Activated T-helper 2 cell treated with anti-CD3 and anti-CD28 coated beads, Interferon-gamma antibody, Interleukin-2, Interleukin-4, amounts not matched to agents 10 μg/mL and 5 μg/mL and 100 μg/mL, durations not matched to agents 14 hours and 24 hours and 36 hours (primary cell): ENCODE measurements at regions of chr9 and their contacts with region 1.

Region 1: GRCh38 chr9:97632985-97633858 is at the starts of genes NCBP1 and TSTD2:
- DNase-seq: peak; percentile 96
- H3K4me3 Mint-ChIP-seq: peak within 1 kb of the TSS; percentile 89
- H3K27ac Mint-ChIP-seq: peak within 1 kb of the TSS; percentile 98
- H3K4me1 Mint-ChIP-seq: peaks cover 46% of the 10 kb centered on the region
- H3K27me3 Mint-ChIP-seq: no peaks in the 10 kb centered on the region
- total RNA-seq, gene NCBP1: 44.2 and 44.8 TPM in 2 replicates
- total RNA-seq, gene TSTD2: 18.8 and 19.4 TPM in 2 replicates

Region 2: DNA sequence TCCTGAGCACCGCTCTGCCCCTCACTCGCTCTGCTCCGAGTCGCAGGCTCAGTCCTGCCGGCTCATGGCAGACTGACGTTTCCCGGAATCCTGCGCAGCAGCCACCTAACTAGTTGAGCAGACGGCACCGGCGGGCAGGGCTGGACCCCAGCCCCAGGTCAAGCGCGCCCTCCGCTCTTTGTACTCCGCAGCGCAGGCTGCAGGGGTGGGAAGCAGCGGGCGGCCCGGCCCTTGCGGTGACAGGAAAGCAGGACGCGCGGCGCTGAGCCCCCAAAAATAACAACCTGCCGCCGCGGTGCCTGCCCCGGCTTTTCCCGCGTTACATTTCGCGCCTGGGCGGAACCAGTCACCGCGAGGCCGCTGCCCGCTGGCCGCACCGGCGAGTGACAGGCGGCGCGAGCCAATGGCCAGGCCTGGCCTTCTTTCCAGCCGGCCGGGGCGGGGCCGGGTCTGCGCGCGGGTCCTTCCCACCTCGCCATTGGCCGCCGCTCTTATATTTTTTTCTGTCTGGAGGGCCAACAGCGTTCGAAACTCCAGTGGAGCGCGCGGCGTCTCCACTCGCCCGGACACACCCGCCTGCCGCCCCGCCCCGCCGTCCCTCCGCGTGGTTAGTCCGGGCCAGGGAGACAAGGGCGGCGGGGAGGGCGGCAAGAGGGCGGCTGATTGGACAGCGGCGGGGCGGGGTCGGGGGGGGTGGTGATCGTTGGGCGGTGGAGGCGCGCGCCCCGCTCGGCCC is 1215.0 kb before region 1 on chr9 and contains the start of gene ZNF367:
- intact Hi-C with region 1: loop called (anchors 10 kb)
- DNase-seq: peak; percentile 95
- H3K4me3 Mint-ChIP-seq: peak within 1 kb of the TSS; percentile 89
- H3K27ac Mint-ChIP-seq: peak within 1 kb of the TSS; percentile 91
- H3K4me1 Mint-ChIP-seq: peaks cover 30% of the 10 kb centered on the region
- H3K27me3 Mint-ChIP-seq: no peaks in the 10 kb centered on the region
- total RNA-seq, gene ZNF367: 19.5 and 19.6 TPM in 2 replicates

Region 3: DNA sequence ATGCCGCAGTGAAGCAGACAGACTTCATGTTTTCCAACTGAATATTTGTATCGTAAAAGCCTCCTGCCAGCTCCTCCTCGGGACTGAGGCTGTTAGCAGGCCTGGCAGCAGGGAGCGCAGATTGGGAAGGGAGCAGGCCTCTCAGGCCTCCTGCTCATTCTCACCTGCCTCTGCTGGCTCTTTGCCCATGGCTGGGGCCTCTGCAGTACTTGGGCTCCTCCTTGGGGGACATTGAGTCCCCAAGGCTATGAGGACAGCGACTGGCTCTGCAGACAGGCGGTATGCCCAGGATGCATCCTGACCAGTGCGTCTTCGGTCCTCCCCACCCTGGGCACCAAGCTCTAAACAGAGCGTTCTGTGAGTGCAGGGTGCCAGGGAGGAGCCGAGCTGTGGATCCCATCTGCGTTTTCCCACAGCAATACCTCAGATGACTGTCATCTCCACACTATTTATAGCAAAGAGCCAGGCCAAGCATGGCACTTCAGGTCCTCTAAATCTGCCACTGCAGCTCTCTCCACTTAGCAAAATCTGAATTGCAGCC is 38.8 kb before region 1 on chr9:
- intact Hi-C with region 1: no loop called
- DNase-seq: no peak
- H3K4me3 Mint-ChIP-seq: no peak overlapping the region
- H3K27ac Mint-ChIP-seq: no peak overlapping the region
- H3K4me1 Mint-ChIP-seq: peaks cover 3% of the 10 kb centered on the region
- H3K27me3 Mint-ChIP-seq: peaks cover 5% of the 10 kb centered on the region

Region 4: DNA sequence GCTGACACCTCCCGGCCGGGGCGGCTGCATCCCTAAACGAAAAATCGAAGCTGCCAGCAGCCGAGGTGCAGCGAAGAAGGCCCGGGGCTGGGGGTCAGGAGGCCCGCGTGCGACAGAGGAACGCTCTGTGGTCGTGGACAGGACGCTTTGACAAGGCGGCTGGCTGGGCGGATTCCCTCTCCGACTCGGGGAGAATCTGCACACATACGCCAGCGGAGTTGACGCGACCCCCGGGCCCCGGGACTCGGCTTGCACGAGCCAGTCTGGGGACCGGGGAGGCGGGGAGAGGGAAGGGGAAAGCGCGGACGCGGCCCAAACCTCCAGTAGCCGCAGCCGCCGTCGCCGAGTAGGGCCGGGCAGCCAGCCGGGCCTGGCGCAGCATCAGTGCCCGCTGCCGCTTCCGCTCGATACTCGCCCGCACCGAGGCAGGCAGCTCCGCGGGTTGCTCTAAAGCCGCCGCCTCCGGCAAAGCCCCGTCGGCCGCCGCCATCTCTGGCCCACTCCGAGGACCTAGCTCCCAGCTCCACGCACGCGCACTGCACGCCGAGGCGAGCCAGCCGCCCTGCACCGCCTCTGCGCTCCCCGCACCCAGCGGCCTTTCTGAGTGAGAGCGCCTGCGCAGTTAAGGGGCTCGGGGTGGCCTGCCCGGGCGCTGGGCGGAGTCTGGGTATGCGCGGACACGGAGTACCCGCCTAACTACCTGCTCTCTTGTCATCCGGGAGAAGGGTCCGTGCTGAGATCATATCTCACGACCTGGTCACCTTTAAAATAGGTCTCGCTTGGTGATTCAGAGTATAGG is 63.8 kb after region 1 on chr9 and contains the start of gene XPA:
- intact Hi-C with region 1: loop called (anchors 1 kb)
- DNase-seq: peak; percentile 97
- H3K4me3 Mint-ChIP-seq: peak within 1 kb of the TSS; percentile 90
- H3K27ac Mint-ChIP-seq: peak within 1 kb of the TSS; percentile 83
- H3K4me1 Mint-ChIP-seq: peaks cover 44% of the 10 kb centered on the region
- H3K27me3 Mint-ChIP-seq: peaks cover 2% of the 10 kb centered on the region
- total RNA-seq, gene XPA: 10.3 and 14.6 TPM in 2 replicates

Region 5: GRCh38 chr9:97900738-97901565 is 267.7 kb after region 1 on chr9:
- intact Hi-C with region 1: loop called (anchors 5 kb)
- DNase-seq: no peak
- H3K4me3 Mint-ChIP-seq: no peak overlapping the region
- H3K27ac Mint-ChIP-seq: no peak overlapping the region
- H3K4me1 Mint-ChIP-seq: peaks cover 35% of the 10 kb centered on the region
- H3K27me3 Mint-ChIP-seq: no peaks in the 10 kb centered on the region

Region 6: DNA sequence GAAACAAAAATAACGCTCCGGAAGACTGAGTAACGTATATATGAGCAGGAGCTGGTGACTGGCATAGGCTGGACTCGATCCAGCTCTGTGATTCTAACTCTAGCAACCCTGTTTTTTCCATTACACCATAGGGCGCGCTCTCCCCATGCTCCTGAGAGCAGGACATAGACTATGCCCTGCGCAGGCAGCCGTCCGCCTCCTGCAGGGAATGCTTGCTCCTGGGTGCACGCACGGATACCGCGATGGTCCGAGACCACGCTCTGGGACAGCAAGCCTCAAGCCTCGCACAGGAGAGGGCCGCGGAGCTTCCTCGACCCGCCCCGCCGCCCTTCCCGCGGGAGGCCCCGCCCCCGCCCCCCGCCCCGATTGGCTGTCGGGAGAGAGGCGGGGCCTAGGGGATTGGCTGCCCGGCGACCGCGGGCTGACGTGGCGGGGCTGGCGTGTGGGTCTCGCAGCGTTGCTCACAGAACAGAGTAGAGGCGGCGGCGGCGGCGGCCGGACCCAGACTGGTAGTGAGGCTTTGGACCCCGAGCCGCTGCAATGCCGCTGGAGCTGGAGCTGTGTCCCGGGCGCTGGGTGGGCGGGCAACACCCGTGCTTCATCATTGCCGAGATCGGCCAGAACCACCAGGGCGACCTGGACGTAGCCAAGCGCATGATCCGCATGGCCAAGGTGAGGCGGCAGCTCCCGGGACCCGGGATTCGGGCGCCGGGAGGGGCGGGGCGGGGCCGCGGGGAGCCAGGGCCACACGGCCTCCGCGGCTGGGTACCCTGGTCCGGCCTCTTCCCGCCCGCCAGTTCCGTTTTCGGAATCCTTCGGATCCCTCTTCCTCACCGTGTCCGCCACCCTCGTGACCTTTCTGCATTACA is 423.3 kb after region 1 on chr9 and contains the start of gene NANS:
- intact Hi-C with region 1: loop called (anchors 5 kb)
- DNase-seq: peak; percentile 89
- H3K4me3 Mint-ChIP-seq: peak within 1 kb of the TSS; percentile 88
- H3K27ac Mint-ChIP-seq: peak within 1 kb of the TSS; percentile 91
- H3K4me1 Mint-ChIP-seq: peaks cover 40% of the 10 kb centered on the region
- H3K27me3 Mint-ChIP-seq: no peaks in the 10 kb centered on the region
- total RNA-seq, gene NANS: 63.4 and 64.7 TPM in 2 replicates